Transverse colon (tissue), 4 donors: ENCODE measurements at regions of chr14 and their contacts with region 1.

Region 1: DNA sequence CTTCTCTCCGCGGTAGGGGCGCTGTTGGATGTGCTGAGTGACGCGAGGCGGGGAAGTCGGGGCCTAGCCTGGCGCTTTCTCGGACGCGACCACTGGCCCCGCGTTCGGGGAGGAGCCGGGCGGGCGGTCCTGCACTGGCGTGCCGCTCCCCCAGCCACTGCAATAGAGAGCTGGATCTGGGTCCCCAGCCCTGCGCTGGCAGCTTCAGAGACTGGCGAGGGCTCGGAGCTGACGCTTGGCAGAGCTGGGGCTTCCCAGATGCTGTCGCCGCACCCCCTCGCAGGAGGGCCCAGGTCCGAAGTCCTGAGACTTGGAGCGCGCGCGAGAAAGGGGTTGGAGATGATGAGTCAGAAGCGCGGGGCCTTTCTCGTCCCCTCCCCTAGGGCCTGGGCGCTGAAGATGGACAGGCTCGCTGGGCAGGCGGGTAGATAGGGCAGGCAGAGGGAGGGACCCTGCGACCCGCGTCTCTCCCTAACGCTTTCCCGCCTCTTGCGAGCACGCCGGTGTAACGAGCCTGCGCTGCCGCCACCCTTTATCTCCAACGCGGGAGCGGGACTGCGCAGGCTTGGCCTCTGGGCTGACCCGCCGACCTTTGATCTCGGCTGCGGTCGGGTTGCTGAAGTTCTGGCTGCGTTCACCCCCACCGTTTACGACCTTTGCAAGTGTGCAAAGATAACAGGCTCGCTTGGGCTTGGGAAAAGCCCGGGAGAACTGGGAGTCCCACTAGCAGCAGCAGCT is 3.0 kb downstream of the TMEM253 start:
- DNase-seq: peak; percentile 97
- H3K4me3 ChIP-seq: peak overlapping the region; percentile 39 to 57 (median 50)
- H3K27ac ChIP-seq: peak overlapping the region; percentile 91 to 99 (median 96)
- H3K4me1 ChIP-seq: peaks cover 45 to 71% (median 63%) of the 10 kb centered on the region in 4 donors
- H3K27me3 ChIP-seq: no peaks in the 10 kb centered on the region
- CTCF ChIP-seq: peak; percentile 71 to 97 (median 79)
- EP300 ChIP-seq: no peak
- POLR2A ChIP-seq: peak; percentile 89

Region 2: DNA sequence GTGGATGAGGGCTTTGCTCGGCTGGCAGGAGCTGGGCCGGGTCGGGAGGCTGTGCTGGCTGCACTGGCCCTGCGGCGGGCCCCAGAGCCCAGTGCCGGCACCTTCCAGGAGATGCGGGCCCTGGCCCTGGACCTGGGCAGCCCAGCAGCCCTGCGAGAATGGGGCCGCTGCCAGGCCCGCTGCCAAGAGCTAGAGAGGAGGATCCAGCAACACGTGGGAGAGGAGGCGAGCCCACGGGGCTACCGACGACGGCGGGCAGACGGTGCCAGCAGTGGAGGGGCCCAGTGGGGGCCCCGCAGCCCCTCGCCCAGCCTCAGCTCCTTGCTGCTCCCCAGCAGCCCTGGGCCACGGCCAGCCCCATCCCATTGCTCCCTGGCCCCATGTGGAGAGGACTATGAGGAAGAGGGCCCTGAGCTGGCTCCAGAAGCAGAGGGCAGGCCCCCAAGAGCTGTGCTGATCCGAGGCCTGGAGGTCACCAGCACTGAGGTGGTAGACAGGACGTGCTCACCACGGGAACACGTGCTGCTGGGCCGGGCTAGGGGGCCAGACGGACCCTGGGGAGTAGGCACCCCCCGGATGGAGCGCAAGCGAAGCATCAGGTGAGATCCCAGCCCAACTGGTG is 22.2 kb before region 1 on chr14:
- in situ Hi-C with region 1: no loop called
- intact Hi-C with region 1: no loop called
- DNase-seq: no peak
- H3K4me3 ChIP-seq: no peak overlapping the region
- H3K27ac ChIP-seq: no peak overlapping the region
- H3K4me1 ChIP-seq: peaks cover 0 to 13% (median 4%) of the 10 kb centered on the region in 4 donors
- H3K27me3 ChIP-seq: no peaks in the 10 kb centered on the region
- CTCF ChIP-seq: no peak
- EP300 ChIP-seq: no peak
- POLR2A ChIP-seq: no peak

Region 3: DNA sequence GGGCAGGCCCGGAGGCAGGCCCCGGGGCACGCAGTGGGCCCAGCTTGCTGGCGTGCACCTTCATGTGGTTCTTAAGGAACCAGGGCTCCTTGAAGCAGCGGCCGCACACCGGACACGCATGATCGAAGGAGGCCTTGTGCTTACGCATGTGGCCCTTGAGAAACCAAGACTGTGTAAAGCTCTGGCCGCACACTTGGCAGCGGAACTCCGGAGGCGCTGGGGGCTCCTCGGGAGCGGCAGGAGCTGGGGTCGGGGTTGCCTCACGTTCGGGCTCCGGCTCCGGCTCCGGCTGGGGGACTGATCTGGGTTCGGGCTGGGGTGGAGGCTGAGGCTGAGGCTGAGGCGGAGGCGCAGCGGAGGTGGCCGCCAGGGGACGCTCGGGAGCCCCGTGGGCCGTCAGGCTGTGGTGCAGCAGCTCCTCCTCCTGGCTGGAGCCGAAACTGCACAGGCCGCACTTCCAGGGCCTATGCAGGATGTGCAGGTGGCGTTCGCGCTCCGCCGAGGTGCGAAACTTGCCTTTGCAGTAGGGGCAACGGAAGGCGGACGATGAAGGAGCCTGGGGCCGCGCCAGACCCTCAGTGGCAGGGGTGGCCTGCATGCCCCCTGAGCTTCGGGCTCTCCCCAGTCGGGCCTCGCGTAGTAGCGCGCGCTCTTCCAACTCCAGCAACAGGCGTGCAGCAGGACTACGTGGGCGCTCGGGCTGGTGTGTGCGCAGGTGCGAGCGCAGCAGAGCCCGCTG is 11.4 kb before region 1 on chr14:
- in situ Hi-C with region 1: no loop called
- intact Hi-C with region 1: loop called (anchors 1 kb)
- DNase-seq: peak; percentile 92
- H3K4me3 ChIP-seq: no peak overlapping the region
- H3K27ac ChIP-seq: peak overlapping the region in 3 of 4 donors; percentile 15 to 52 (median 45)
- H3K4me1 ChIP-seq: peaks cover 11 to 57% (median 42%) of the 10 kb centered on the region in 4 donors
- H3K27me3 ChIP-seq: no peaks in the 10 kb centered on the region
- CTCF ChIP-seq: peak; percentile 100
- EP300 ChIP-seq: no peak
- POLR2A ChIP-seq: no peak

Region 4: DNA sequence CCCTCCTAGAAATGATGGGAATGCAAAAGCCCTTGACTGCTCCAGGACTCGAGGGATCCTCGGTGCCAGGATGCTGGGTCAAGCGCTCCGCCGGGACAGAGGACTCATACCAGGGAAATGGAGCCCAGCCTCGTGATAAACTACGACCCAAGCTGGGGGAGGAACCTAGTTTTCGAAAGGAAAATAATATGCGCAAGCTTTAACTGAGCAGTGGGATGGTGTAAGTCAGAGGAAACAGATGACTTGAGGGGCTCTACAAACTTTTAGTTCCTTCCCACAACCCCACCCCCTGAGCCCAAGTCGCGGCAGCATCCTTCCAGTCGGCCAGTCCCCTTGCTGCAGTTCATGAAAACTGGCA is 280.6 kb after region 1 on chr14:
- in situ Hi-C with region 1: no loop called
- intact Hi-C with region 1: no loop called
- DNase-seq: no peak
- H3K4me3 ChIP-seq: peak overlapping the region; percentile 67 to 97 (median 82)
- H3K27ac ChIP-seq: peak overlapping the region; percentile 92 to 96 (median 94)
- H3K4me1 ChIP-seq: peaks cover 11 to 25% (median 16%) of the 10 kb centered on the region in 4 donors
- H3K27me3 ChIP-seq: no peaks in the 10 kb centered on the region
- CTCF ChIP-seq: no peak
- EP300 ChIP-seq: no peak
- POLR2A ChIP-seq: no peak

Region 5: DNA sequence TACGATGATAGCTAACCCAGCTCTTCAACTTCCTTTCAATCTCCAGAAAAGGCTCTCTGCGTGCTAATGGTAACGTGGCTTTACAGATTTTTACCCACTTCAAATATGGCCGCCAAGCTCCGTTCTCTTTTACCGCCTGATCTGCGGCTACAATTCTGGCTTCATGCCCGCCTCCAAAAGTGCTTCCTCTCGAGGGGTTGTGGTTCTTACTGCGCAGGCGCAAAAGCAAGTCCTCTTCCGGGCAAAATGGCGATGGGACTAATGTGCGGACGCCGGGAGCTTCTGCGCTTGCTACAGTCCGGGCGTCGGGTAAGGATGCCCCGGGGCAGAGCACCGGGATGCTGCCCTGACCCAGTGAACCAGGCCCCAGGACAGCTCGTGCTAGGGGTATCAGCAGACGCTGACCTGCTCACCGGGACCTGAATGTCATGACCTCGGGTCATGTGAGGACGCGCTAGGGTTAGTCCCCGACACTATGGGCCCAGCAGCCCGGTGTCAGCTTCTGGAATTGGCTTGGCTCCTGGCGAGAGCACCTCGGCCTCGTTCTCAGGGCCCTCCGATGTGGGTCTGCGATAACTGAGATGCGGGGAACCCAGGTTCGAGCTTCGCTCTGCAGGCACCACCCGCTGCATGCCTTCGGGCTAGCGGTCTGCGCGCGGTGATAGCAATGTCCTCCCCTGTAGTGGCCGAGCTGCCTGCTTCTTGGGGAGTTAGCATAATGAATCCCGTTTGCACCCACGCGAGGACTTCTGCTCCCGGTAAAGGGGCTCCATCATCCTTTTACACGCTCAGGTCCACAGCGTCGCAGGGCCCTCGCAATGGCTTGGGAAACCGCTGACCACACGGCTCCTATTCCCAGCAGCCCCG is 1662.8 kb after region 1 on chr14 and contains the start of gene OXA1L:
- in situ Hi-C with region 1: no loop called
- intact Hi-C with region 1: no loop called
- DNase-seq: peak; percentile 98
- H3K4me3 ChIP-seq: peak within 1 kb of the TSS; percentile 62 to 76 (median 74)
- H3K27ac ChIP-seq: peak within 1 kb of the TSS; percentile 78 to 89 (median 86)
- H3K4me1 ChIP-seq: peaks cover 15 to 26% (median 17%) of the 10 kb centered on the region in 4 donors
- H3K27me3 ChIP-seq: no peaks in the 10 kb centered on the region
- CTCF ChIP-seq: no peak
- EP300 ChIP-seq: no peak
- POLR2A ChIP-seq: peak; percentile 70
- total RNA-seq, gene OXA1L: 65.9 to 132 (median 106) TPM